Esophagus muscularis mucosa (tissue), 4 donors: ENCODE measurements at regions of chr12 and their contacts with region 1.

Region 1: DNA sequence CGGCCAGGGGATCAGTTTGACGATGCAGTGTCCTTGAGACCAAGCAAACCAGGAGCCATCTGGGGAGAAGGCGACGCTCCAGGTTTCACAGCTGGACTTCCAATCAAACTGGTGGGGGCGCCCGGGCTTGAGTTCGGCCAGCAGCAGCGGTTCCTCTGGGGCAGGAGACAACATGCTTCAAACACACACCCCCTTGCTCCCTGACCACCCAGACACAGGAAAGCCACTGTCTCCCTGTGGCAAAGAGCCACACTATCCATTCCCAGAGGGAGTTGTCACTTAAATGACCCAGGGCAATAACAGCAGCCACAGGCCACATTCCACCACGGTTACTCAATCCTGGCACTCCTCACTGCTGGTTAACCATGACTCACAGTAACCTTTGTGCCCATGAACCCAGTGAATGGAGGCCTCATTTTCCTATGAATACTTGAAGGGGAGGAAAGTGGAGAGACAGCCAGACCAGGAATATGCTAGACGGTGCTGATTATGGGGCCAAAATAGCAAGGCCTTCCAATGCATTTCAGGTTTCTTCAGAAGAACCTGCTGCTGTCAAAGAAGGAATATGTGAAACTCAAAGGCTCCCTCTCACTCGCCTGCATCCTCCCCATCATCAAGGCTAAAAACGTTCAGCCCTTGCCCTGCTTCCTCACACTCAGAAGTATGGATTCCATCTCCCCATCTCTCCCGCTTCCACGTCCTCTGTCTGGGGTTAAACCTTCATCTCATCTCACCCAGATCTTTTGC is 8.5 kb downstream of the WSB2 start:
- DNase-seq: no peak
- H3K4me3 ChIP-seq: no peak overlapping the region
- H3K27ac ChIP-seq: peak overlapping the region; percentile 47 to 77 (median 74)
- H3K4me1 ChIP-seq: peaks cover 42 to 52% (median 47%) of the 10 kb centered on the region in 4 donors
- H3K27me3 ChIP-seq: no peaks in the 10 kb centered on the region
- CTCF ChIP-seq: no peak
- EP300 ChIP-seq: no peak
- POLR2A ChIP-seq: no peak

Region 2: DNA sequence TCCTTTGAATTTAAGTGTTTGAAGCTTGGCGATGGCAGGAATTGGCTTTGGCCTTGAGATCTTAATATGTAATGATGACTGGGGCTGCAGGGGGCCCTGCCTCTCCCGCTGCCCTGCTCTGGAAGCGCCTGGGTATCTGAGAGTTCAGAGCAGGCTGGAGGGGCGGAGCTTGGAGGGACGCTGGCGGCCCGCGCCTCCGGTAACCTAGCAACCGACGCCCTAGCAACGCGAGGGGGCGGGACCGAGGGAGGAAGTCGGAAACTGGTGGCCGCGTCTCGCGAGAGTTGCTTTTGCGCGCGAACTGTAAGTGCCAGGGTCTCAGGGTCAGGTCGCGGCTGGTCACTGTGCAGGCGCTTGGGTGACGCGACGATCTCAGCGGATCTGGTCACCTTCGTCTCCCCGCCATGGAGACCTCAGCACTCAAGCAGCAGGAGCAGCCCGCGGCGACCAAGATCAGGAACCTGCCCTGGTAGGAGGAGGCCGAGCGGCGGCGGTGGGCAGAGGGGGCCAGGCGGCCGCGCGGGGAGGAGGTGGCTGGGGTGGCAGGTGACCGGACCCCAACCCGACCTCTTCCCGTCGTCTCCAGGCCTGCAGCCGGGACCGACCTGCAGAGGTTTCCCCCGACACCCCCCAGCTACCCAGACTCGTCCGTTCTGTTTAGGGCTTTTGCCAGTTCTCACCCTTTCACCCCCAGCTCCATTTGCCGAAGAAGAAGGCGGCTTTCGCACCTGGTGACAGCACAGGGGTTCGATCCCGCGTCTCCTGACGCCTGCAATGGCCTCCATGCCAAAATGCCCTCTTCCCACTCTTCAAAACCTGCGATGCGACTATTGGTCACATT is 35.9 kb before region 1 on chr12 and contains the start of gene RFC5:
- intact Hi-C with region 1: loop called (anchors 5 kb)
- DNase-seq: peak; percentile 99
- H3K4me3 ChIP-seq: peak within 1 kb of the TSS; percentile 72 to 90 (median 86)
- H3K27ac ChIP-seq: peak within 1 kb of the TSS; percentile 42 to 69 (median 59)
- H3K4me1 ChIP-seq: peaks cover 6 to 20% (median 16%) of the 10 kb centered on the region in 4 donors
- H3K27me3 ChIP-seq: no peaks in the 10 kb centered on the region
- CTCF ChIP-seq: no peak
- EP300 ChIP-seq: no peak
- POLR2A ChIP-seq: no peak
- total RNA-seq, gene RFC5: 8.7 to 11.3 (median 10.0) TPM

Region 3: GRCh38 chr12:118089782-118090181 is 37.3 kb after region 1 on chr12:
- intact Hi-C with region 1: no loop called
- DNase-seq: no peak
- H3K4me3 ChIP-seq: no peak overlapping the region
- H3K27ac ChIP-seq: no peak overlapping the region
- H3K4me1 ChIP-seq: no peaks in the 10 kb centered on the region
- H3K27me3 ChIP-seq: no peaks in the 10 kb centered on the region
- CTCF ChIP-seq: no peak
- EP300 ChIP-seq: no peak
- POLR2A ChIP-seq: no peak

Region 4: GRCh38 chr12:118237052-118237665 is 184.7 kb after region 1 on chr12:
- intact Hi-C with region 1: no loop called
- DNase-seq: no peak
- H3K4me3 ChIP-seq: no peak overlapping the region
- H3K27ac ChIP-seq: no peak overlapping the region
- H3K4me1 ChIP-seq: no peaks in the 10 kb centered on the region
- H3K27me3 ChIP-seq: no peaks in the 10 kb centered on the region
- CTCF ChIP-seq: no peak
- EP300 ChIP-seq: no peak
- POLR2A ChIP-seq: no peak